ENCODE measurements at regions of chr7 and their contacts with region 1.

Region 1: GRCh38 chr7:50418086-50418515 is 32.0 kb downstream of the FIGNL1 start:
- DNase-seq: peak; percentile 86 to 89
- H3K4me3 ChIP-seq: no peak overlapping the region
- H3K4me3 Mint-ChIP-seq: no peak overlapping the region
- H3K27ac Mint-ChIP-seq: no peak overlapping the region
- H3K4me1 ChIP-seq: no peaks in the 10 kb centered on the region; the same call in 1 of the 2 replicates
- H3K4me1 Mint-ChIP-seq: peaks cover 2% of the 10 kb centered on the region
- H3K27me3 ChIP-seq: no peaks in the 10 kb centered on the region
- H3K27me3 Mint-ChIP-seq: no peaks in the 10 kb centered on the region
- CTCF ChIP-seq: peak; percentile 88 to 97

Region 2: DNA sequence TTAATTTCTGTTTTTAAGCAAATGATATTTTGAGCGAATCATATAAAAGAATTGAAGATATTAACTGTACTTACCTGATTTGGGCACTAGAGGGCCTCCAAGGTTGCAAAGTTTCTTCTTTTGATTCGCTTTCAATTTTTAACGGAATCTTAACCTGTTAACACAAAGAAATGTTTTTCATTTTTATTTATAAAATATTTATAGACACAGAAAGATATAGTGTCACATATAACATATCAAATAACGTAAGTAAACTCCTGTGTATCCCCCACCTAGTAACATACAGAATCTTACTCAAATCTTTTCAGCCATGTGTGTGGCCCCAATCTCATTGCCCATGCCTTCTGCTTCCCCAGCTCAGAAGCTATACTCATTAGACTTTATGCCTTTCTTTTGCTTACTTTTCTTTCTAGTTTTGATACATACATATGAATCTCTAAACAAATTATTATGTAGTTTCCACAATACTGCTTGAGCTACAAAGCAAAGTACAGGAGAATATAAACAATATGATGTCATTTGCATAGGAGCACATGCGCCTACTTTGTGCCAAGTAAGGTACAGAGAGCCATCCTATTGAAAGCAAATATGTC is 275.6 kb before region 1 on chr7:
- CTCF ChIA-PET with region 1: interaction called, 3 read pairs
- POLR2A ChIA-PET with region 1: no interaction called
- intact Hi-C with region 1: loop called (anchors 1 kb)
- DNase-seq: peak in 1 of 2 experiments; percentile 16
- H3K4me3 ChIP-seq: no peak overlapping the region
- H3K4me3 Mint-ChIP-seq: no peak overlapping the region
- H3K27ac Mint-ChIP-seq: no peak overlapping the region
- H3K4me1 ChIP-seq: no peaks in the 10 kb centered on the region
- H3K4me1 Mint-ChIP-seq: no peaks in the 10 kb centered on the region
- H3K27me3 ChIP-seq: no peaks in the 10 kb centered on the region
- H3K27me3 Mint-ChIP-seq: peaks cover 13% of the 10 kb centered on the region
- CTCF ChIP-seq: peak; percentile 61 to 67

Region 3: DNA sequence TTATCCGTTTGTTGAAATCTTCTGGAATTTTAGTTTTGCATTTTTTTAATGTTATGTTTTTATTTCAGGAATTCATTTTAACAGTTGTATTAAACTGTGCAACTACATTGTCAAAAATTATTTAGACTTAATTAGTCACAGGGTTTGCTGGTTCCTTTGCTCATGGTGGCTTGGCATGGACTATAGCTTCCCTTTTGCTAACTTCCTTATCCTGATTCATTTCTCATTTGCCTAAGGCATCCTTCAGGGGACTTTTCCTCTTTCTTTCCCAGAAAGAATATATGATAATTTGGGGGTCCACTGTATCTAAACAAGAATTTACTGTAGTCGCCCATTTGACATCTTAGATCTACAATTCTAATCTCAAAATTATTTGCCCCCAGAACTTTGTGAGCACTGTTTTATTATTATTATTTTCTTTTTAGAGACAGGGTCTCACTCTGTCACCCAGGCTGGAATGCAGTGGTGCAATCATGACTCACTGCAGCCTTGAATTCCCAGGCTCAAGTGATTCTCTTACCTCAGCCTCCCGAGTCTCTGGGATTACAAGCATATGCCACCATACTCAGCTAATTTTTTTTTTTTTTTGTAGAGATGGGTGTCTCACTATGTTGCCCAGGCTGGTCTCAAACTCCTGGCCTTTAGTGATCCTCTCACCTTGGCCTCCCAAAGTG is 18.2 kb after region 1 on chr7:
- CTCF ChIA-PET with region 1: no interaction called
- POLR2A ChIA-PET with region 1: no interaction called
- intact Hi-C with region 1: no loop called
- DNase-seq: peak in 1 of 2 experiments; percentile 31
- H3K4me3 ChIP-seq: no peak overlapping the region
- H3K4me3 Mint-ChIP-seq: no peak overlapping the region
- H3K27ac Mint-ChIP-seq: peak overlapping the region; percentile 63
- H3K4me1 ChIP-seq: peaks cover 9% of the 10 kb centered on the region
- H3K4me1 Mint-ChIP-seq: peaks cover 7% of the 10 kb centered on the region
- H3K27me3 ChIP-seq: no peaks in the 10 kb centered on the region
- H3K27me3 Mint-ChIP-seq: no peaks in the 10 kb centered on the region
- CTCF ChIP-seq: no peak

Region 4: GRCh38 chr7:50664461-50664922 is 246.4 kb after region 1 on chr7:
- CTCF ChIA-PET with region 1: no interaction called
- POLR2A ChIA-PET with region 1: no interaction called
- intact Hi-C with region 1: no loop called
- DNase-seq: no peak
- H3K4me3 ChIP-seq: no peak overlapping the region
- H3K4me3 Mint-ChIP-seq: no peak overlapping the region
- H3K27ac Mint-ChIP-seq: no peak overlapping the region
- H3K4me1 ChIP-seq: no peaks in the 10 kb centered on the region
- H3K4me1 Mint-ChIP-seq: no peaks in the 10 kb centered on the region
- H3K27me3 ChIP-seq: no peaks in the 10 kb centered on the region
- H3K27me3 Mint-ChIP-seq: no peaks in the 10 kb centered on the region
- CTCF ChIP-seq: no peak

Region 5: DNA sequence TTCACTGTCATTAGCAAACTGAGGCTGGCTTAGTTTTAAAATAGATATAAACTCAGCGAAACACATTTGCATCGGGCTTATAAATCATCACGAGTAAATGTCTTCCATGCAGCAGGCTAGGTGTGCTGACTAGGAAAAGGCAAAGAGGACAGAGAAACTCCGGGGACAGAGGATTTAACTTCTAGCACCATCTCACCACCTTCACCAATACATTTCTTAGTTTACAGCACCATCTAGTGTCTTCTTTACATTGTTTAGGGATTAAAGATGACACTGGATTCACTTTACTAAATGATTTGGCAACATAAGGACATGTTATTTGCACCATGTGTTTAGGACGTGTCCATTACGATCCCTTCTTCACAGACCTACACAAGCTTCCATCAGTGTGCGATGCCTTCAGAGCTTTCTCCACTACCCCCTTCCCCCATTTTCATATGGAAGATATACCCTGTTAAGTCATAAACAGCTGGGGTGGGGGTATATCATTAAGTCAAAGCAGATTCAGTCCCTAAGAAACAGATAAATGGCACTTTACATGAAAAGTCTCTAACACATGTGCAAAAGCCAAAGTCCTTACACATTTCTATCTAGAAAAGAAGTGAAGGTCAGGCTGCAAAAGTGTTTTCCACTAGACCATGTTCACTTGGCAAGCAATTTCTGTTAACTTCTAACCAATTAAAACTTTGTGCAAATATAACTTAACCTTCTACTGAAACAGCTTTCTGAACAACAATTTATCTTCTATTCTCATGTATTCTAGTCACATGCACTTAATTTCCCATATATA is 261.3 kb after region 1 on chr7:
- CTCF ChIA-PET with region 1: no interaction called
- POLR2A ChIA-PET with region 1: no interaction called
- intact Hi-C with region 1: loop called (anchors 1 kb)
- DNase-seq: peak in 1 of 2 experiments; percentile 22
- H3K4me3 ChIP-seq: no peak overlapping the region
- H3K4me3 Mint-ChIP-seq: no peak overlapping the region
- H3K27ac Mint-ChIP-seq: no peak overlapping the region
- H3K4me1 ChIP-seq: no peaks in the 10 kb centered on the region
- H3K4me1 Mint-ChIP-seq: no peaks in the 10 kb centered on the region
- H3K27me3 ChIP-seq: no peaks in the 10 kb centered on the region
- H3K27me3 Mint-ChIP-seq: no peaks in the 10 kb centered on the region
- CTCF ChIP-seq: peak in 1 of 2 experiments; percentile 15

Measured in Caco-2 (cell line).